Ovary (tissue), 10 donors: ENCODE measurements at regions of chr15 and their contacts with region 1.

Region 1: DNA sequence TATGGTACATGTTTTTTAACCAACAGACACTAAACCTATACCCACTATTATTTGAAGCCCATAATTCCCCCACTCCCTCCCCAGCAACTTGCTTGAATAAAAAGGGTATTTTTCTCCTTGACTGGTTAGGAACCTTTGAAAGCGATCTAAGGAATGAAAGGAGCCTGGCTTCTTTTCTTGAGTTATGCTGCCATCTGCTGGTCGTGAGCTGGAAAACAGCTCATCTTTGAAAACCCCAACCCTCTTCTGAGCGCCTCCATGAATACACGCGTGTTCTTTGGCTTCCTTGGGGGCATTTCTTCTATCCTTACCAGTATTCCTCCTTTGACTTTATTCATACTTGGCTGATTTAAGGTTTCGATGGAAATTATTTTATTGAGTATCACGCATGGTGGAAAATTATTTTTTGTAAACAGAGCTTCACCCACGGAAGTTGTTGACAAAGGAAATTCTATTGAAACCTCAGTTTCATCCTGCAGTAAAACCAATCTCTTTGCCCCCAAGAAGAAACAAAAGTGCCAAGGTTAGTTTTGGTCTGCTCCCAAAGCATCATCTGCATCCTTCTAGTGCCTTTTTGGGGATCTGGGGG is 171.6 kb downstream of the SV2B start:
- DNase-seq: peak; percentile 15 to 57 (median 47)
- H3K4me3 ChIP-seq: no peak overlapping the region
- H3K27ac ChIP-seq: no peak overlapping the region
- H3K4me1 ChIP-seq: no peaks in the 10 kb centered on the region
- H3K27me3 ChIP-seq: no peaks in the 10 kb centered on the region
- CTCF ChIP-seq: peak; percentile 9 to 49 (median 36)
- EP300 ChIP-seq: no peak
- POLR2A ChIP-seq: no peak

Region 2: GRCh38 chr15:90954712-90955671 is 316.7 kb before region 1 on chr15 and contains the start of gene RCCD1:
- intact Hi-C with region 1: loop called in 2 of 4 experiments (anchors 5 to 10 kb)
- DNase-seq: peak; percentile 92 to 95 (median 93)
- H3K4me3 ChIP-seq: peak within 1 kb of the TSS; percentile 61
- H3K27ac ChIP-seq: peak within 1 kb of the TSS; percentile 78 to 80
- H3K4me1 ChIP-seq: peaks cover 7% of the 10 kb centered on the region
- H3K27me3 ChIP-seq: no peaks in the 10 kb centered on the region
- CTCF ChIP-seq: no peak
- EP300 ChIP-seq: no peak
- POLR2A ChIP-seq: peak; percentile 56
- total RNA-seq, gene RCCD1: 8.8 to 15.6 (median 13.5) TPM

Region 3: GRCh38 chr15:91061997-91062396 is 209.7 kb before region 1 on chr15:
- intact Hi-C with region 1: loop called in 1 of 4 experiments (anchors 5 kb)
- DNase-seq: no peak
- H3K4me3 ChIP-seq: no peak overlapping the region
- H3K27ac ChIP-seq: no peak overlapping the region
- H3K4me1 ChIP-seq: no peaks in the 10 kb centered on the region
- H3K27me3 ChIP-seq: no peaks in the 10 kb centered on the region
- CTCF ChIP-seq: no peak
- EP300 ChIP-seq: no peak
- POLR2A ChIP-seq: no peak

Region 4: GRCh38 chr15:91329914-91330313 is 58.3 kb after region 1 on chr15:
- intact Hi-C with region 1: no loop called
- DNase-seq: no peak
- H3K4me3 ChIP-seq: no peak overlapping the region
- H3K27ac ChIP-seq: no peak overlapping the region
- H3K4me1 ChIP-seq: no peaks in the 10 kb centered on the region
- H3K27me3 ChIP-seq: no peaks in the 10 kb centered on the region
- CTCF ChIP-seq: no peak
- EP300 ChIP-seq: no peak
- POLR2A ChIP-seq: no peak

Region 5: DNA sequence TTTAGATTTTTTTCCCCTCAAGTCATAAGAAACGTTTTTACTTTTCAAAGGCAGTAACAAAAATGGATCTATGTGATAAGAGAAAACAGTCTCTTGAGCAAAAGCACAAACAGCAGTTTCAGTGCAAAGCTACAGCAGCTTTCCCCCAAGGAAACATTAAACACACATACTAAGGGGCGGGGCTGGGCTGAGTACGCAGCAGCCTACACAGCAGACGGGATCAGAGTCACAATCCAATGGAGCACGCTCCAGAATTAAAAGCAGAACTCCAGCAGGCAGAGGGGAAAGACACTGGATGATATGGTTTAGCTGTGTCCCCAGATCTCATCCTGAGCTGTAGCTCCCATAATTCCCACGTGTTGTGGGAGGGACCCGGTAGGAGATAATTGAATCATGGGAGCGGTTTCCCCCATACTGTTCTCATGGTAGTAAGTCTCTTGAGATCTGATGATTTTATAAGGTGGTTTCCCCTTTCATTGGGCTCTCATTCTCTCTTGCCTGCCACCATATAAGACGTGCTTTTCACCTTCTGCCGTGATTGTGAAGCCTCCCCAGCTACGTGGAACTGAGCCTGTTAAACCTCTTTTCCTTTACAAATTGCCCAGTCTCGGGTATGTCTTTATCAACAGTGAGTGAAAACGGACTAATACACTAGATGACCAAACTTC is 465.6 kb after region 1 on chr15:
- intact Hi-C with region 1: no loop called
- DNase-seq: no peak
- H3K4me3 ChIP-seq: no peak overlapping the region
- H3K27ac ChIP-seq: no peak overlapping the region
- H3K4me1 ChIP-seq: peaks cover 2% of the 10 kb centered on the region
- H3K27me3 ChIP-seq: no peaks in the 10 kb centered on the region
- CTCF ChIP-seq: no peak
- EP300 ChIP-seq: no peak
- POLR2A ChIP-seq: no peak